ENCODE measurements at regions of chr2 and their contacts with region 1.

Region 1: GRCh38 chr2:197878792-197879191 is 74.4 kb downstream of the PLCL1 start:
- DNase-seq: no peak
- H3K4me3 ChIP-seq: no peak overlapping the region
- H3K27ac ChIP-seq: peak overlapping the region in 1 of 2 donors; percentile 10
- H3K4me1 ChIP-seq: peaks cover 3 to 36% of the 10 kb centered on the region in 2 donors
- H3K27me3 ChIP-seq: no peaks in the 10 kb centered on the region
- CTCF ChIP-seq: no peak

Region 2: DNA sequence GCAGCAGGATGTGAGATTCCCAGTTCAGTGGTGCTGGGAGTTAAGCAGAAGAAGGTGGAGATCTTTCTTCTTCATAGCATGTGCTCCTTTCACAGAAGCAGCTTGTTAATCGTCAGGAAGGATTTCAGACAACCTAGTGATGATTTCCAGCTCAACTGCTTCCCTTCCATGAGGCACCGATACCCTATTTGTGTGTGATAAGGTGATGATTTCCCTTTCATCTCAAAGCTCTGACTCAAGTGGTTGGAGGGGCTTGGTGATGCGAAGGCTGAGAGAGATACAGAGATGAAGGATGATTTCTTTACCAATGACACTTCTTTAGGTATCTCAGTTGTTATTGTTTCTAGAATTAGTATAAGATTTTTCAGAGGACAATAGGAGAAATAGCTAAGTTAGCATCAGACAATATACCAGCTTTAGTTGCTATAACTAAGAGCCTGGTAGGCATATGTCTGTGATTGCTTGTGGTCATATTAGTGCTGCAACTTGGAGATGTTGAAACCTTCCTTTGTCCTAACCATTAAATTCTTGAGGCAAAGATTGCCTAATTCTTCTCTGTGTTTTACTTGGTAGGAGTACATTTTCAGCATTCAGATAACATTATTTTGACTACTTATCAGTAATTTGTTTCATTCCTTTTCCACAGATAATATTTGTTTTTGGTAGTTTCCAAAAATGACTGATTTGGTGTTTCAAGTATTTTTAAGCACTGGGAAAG is 36.9 kb after region 1 on chr2:
- intact Hi-C with region 1: loop called (anchors 5 kb)
- DNase-seq: no peak
- H3K4me3 ChIP-seq: no peak overlapping the region
- H3K27ac ChIP-seq: peak overlapping the region in 1 of 2 donors; percentile 27
- H3K4me1 ChIP-seq: peaks cover 0 to 35% of the 10 kb centered on the region in 2 donors
- H3K27me3 ChIP-seq: no peaks in the 10 kb centered on the region
- CTCF ChIP-seq: no peak

Region 3: GRCh38 chr2:198173242-198173641 is 294.4 kb after region 1 on chr2:
- intact Hi-C with region 1: no loop called
- DNase-seq: no peak
- H3K4me3 ChIP-seq: no peak overlapping the region
- H3K27ac ChIP-seq: no peak overlapping the region
- H3K4me1 ChIP-seq: no peaks in the 10 kb centered on the region
- H3K27me3 ChIP-seq: no peaks in the 10 kb centered on the region
- CTCF ChIP-seq: no peak